Activated B cell treated with CpG ODN at 0.5 μM for 24 hours (primary cell): ENCODE measurements at regions of chr11 and their contacts with region 1.

Region 1: GRCh38 chr11:73350908-73351636 is 25.1 kb upstream of the RELT start:
- DNase-seq: peak; percentile 38
- ATAC-seq: peak; percentile 94
- H3K4me3 Mint-ChIP-seq: no peak overlapping the region
- H3K27ac Mint-ChIP-seq: peak overlapping the region; percentile 33
- H3K4me1 Mint-ChIP-seq: no peaks in the 10 kb centered on the region
- H3K27me3 Mint-ChIP-seq: no peaks in the 10 kb centered on the region
- CTCF ChIP-seq: peak; percentile 97

Region 2: DNA sequence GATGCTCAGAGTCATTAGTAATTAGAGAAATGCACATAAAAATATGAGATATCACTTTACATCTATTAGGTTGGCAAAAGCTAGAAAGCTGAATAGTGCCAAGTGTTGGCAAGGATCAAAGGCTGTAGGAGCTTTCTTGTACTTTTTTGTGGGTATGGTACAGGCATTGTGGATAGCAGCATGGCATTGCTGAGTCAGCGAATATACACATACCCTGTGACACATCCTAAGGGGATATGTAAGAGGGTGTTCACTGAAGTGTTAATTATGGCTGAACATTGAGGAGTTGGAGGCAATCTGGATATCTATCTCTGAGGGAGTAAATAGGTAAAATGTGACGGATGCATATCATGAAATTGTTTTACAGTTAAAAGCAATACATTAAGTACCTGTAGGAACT is 1379.4 kb before region 1 on chr11:
- CTCF ChIA-PET with region 1: no interaction called
- POLR2A ChIA-PET with region 1: no interaction called
- intact Hi-C with region 1: no loop called
- DNase-seq: no peak
- ATAC-seq: no peak
- H3K4me3 Mint-ChIP-seq: no peak overlapping the region
- H3K27ac Mint-ChIP-seq: no peak overlapping the region
- H3K4me1 Mint-ChIP-seq: no peaks in the 10 kb centered on the region
- H3K27me3 Mint-ChIP-seq: no peaks in the 10 kb centered on the region
- CTCF ChIP-seq: no peak

Region 3: DNA sequence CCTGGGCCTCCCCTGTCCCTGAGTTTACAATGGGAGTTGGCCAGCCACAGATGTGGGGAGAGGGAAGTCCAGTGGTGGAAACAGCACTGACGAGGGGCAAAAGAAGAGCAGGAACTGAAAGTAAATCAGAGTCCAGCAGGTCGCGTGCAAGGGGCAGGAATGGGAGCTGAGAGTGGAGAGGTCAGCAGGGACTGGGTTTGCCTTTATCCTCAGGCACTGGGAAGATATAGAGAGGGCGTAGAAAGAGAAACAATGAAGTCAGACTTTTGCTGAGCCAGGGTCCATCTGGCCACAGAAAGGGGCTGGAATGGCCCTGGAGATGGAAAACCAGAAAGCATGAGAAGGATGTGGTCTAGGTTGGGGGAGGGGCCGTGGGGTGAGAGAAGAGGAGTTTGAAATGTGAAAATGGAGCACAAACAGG is 70.4 kb before region 1 on chr11:
- CTCF ChIA-PET with region 1: no interaction called
- POLR2A ChIA-PET with region 1: no interaction called
- intact Hi-C with region 1: no loop called
- DNase-seq: no peak
- ATAC-seq: no peak
- H3K4me3 Mint-ChIP-seq: no peak overlapping the region
- H3K27ac Mint-ChIP-seq: no peak overlapping the region
- H3K4me1 Mint-ChIP-seq: no peaks in the 10 kb centered on the region
- H3K27me3 Mint-ChIP-seq: no peaks in the 10 kb centered on the region
- CTCF ChIP-seq: no peak

Region 4: GRCh38 chr11:73307323-73308002 is 43.6 kb before region 1 on chr11:
- CTCF ChIA-PET with region 1: interaction called, 10 read pairs
- POLR2A ChIA-PET with region 1: no interaction called
- intact Hi-C with region 1: no loop called
- DNase-seq: peak; percentile 85
- ATAC-seq: peak; percentile 73
- H3K4me3 Mint-ChIP-seq: peak overlapping the region; percentile 93
- H3K27ac Mint-ChIP-seq: no peak overlapping the region
- H3K4me1 Mint-ChIP-seq: peaks cover 11% of the 10 kb centered on the region
- H3K27me3 Mint-ChIP-seq: peaks cover 8% of the 10 kb centered on the region
- CTCF ChIP-seq: no peak

Region 5: GRCh38 chr11:73376160-73376802 is 25.2 kb after region 1 on chr11 and contains the start of gene RELT:
- CTCF ChIA-PET with region 1: interaction called, 24 read pairs
- POLR2A ChIA-PET with region 1: no interaction called
- intact Hi-C with region 1: loop called (anchors 1 kb)
- DNase-seq: peak; percentile 99
- ATAC-seq: peak; percentile 89
- H3K4me3 Mint-ChIP-seq: peak within 1 kb of the TSS; percentile 89
- H3K27ac Mint-ChIP-seq: peak within 1 kb of the TSS; percentile 89
- H3K4me1 Mint-ChIP-seq: peaks cover 73% of the 10 kb centered on the region
- H3K27me3 Mint-ChIP-seq: no peaks in the 10 kb centered on the region
- CTCF ChIP-seq: peak; percentile 63
- total RNA-seq, gene RELT: 81.8 and 90.1 TPM in 2 replicates

Region 6: DNA sequence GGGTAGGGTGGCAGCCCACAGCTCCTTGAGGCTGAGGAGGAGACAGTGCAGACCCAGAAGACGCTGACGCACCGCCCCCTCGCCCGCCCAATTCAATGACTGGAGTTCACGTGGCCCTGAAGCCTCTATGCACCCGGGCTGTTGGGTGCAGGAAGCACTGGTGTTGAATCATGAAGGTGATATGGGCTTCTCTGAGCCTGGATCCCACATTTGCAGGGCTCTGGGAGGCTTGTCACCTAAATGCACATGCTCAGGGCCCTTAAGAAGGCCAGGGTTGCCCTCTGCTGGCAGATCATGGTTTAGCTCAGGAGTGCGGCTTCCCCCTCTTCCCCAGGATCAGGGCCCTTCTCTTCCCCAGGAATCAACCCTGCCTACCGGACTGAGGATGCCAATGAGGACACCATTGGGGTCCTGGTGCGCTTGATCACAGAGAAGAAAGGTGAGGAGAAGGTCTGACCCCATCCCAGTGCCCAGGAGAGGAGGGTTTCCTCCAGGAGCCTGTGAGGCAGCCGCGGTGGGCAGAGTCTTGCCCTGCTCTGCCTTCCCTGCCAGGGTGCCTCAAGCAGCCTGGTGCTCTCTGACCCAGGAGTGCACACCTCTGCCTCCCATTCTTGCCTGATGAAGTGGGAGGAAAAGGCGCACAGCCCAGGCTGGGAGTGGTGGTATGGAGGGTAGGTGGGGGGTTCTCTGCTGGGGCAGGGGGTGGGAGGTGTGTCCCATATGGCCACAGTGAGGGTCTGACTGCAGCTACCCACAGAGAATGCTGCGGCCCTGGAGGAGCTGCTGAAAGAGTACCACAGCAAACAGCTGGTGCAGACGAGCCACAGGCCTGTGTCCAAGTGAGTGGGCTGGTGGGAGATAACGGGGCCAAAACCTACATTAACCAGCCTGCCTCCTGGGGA is 42.7 kb after region 1 on chr11:
- CTCF ChIA-PET with region 1: interaction called, 148 read pairs
- POLR2A ChIA-PET with region 1: interaction called, 22 read pairs
- intact Hi-C with region 1: loop called (anchors 1 kb)
- DNase-seq: peak; percentile 52
- ATAC-seq: peak; percentile 82
- H3K4me3 Mint-ChIP-seq: no peak overlapping the region
- H3K27ac Mint-ChIP-seq: peak overlapping the region; percentile 46
- H3K4me1 Mint-ChIP-seq: peaks cover 24% of the 10 kb centered on the region
- H3K27me3 Mint-ChIP-seq: no peaks in the 10 kb centered on the region
- CTCF ChIP-seq: peak; percentile 24

Region 7: GRCh38 chr11:73625696-73626318 is 274.7 kb after region 1 on chr11:
- CTCF ChIA-PET with region 1: interaction called, 18 read pairs
- POLR2A ChIA-PET with region 1: no interaction called
- intact Hi-C with region 1: no loop called
- DNase-seq: peak; percentile 34
- ATAC-seq: peak; percentile 93
- H3K4me3 Mint-ChIP-seq: no peak overlapping the region
- H3K27ac Mint-ChIP-seq: no peak overlapping the region
- H3K4me1 Mint-ChIP-seq: peaks cover 8% of the 10 kb centered on the region
- H3K27me3 Mint-ChIP-seq: peaks cover 9% of the 10 kb centered on the region
- CTCF ChIP-seq: peak; percentile 76